Ascending aorta (tissue), 2 donors: ENCODE measurements at regions of chr17 and their contacts with region 1.

Region 1: DNA sequence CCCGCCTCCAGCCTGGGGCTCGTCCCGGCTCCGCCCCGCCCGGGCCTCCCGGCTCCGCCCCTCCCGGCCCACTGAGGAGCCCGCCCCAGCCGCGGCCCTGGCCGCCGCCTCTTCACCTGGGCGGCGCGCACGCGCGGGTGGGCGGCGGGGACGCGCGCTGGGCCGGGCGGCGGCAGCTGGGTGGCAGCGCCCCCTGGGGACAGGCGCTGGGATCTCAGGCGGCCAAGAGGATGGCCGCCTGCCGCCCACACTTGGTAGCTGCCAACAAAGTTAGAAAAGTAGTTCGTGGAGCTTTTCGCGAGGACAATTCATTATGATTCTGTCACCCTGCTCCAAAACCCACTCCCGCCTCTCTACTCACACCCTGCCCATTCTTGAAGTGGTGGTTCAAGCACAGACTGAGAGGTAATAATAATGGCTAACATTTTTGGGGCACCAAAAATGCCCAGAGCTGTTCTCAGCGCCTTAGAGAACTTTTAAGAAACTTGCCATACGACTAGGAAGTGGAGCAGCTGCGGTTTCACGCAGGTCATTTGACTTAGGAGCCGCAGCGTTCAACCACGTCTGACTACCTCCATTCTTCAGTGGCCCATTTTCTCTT is 340 bp upstream of the MYO1D start:
- DNase-seq: peak; percentile 50 to 96
- H3K4me3 ChIP-seq: peak overlapping the region; percentile 85 to 93
- H3K27ac ChIP-seq: peak overlapping the region; percentile 96 to 98
- H3K4me1 ChIP-seq: peaks cover 4 to 19% of the 10 kb centered on the region in 2 donors
- H3K27me3 ChIP-seq: no peaks in the 10 kb centered on the region
- CTCF ChIP-seq: peak; percentile 73 to 100 (median 79)

Region 2: DNA sequence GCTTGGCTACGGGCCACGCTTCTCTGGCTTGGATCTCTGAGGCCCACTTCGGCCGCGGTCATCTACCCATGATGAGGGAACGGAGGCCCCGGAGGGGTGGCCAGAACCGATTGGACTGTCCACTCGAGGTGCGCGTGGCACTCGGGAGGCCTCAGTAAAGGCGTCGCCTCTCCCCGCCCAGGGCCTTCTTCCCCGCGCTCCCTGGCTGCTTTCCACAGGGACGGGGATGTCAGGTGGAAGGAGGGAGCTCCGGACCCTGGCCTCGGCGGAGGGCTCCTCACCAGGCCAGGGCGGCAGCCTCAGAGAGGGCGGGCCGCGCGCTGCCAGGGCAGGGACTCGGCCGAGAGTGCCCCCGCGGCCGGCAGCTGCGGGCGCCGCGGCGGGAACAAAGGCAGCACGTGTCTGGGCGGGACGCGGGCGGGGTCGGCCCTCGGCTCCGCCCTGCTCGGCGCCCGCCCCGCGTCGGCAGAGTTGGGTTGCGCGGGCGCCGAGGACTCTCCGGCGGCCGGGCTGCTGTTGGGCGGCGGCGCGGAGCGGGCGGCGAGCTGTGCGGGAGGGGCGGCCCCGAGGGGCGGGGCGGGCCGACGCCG is 391.1 kb before region 1 on chr17:
- intact Hi-C with region 1: loop called (anchors 5 kb)
- DNase-seq: peak in 1 of 2 donors; percentile 84
- H3K4me3 ChIP-seq: peak overlapping the region; percentile 75 to 76
- H3K27ac ChIP-seq: peak overlapping the region; percentile 80 to 81
- H3K4me1 ChIP-seq: peaks cover 0 to 27% of the 10 kb centered on the region in 2 donors
- H3K27me3 ChIP-seq: no peaks in the 10 kb centered on the region
- CTCF ChIP-seq: no peak

Region 3: GRCh38 chr17:32659419-32659842 is 217.8 kb before region 1 on chr17:
- intact Hi-C with region 1: loop called (anchors 10 kb)
- DNase-seq: peak; percentile 12 to 85
- H3K4me3 ChIP-seq: no peak overlapping the region
- H3K27ac ChIP-seq: no peak overlapping the region
- H3K4me1 ChIP-seq: peaks cover 0 to 19% of the 10 kb centered on the region in 2 donors
- H3K27me3 ChIP-seq: no peaks in the 10 kb centered on the region
- CTCF ChIP-seq: peak; percentile 77 to 92 (median 90)

Region 4: DNA sequence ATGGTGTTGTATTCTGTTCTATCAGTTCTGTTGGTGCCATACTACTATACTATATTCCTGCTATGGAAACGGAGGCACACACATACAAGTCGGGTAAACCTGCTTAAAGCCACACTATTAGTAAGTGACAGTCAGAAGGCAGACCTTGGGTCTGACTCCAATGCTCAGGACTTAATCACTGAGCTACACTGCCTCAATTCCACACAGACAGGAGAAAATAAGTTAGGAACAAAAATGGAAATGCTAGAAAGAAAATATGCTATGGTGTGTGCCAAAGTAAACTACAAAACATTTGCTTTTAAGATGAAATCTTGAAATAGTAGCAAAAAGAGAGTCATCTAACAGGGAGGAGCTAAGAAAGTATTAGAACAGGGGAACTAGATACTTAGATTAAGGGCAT is 48.4 kb before region 1 on chr17:
- intact Hi-C with region 1: loop called (anchors 2 kb)
- DNase-seq: no peak
- H3K4me3 ChIP-seq: no peak overlapping the region
- H3K27ac ChIP-seq: peak overlapping the region; percentile 44 to 81
- H3K4me1 ChIP-seq: peaks cover 0 to 47% of the 10 kb centered on the region in 2 donors
- H3K27me3 ChIP-seq: no peaks in the 10 kb centered on the region
- CTCF ChIP-seq: no peak

Region 5: GRCh38 chr17:32854207-32854606 is 23.1 kb before region 1 on chr17:
- intact Hi-C with region 1: no loop called
- DNase-seq: no peak
- H3K4me3 ChIP-seq: no peak overlapping the region
- H3K27ac ChIP-seq: peak overlapping the region; percentile 13 to 59
- H3K4me1 ChIP-seq: peaks cover 0 to 35% of the 10 kb centered on the region in 2 donors
- H3K27me3 ChIP-seq: no peaks in the 10 kb centered on the region
- CTCF ChIP-seq: no peak

Region 6: GRCh38 chr17:32936894-32937500 is 59.7 kb after region 1 on chr17:
- intact Hi-C with region 1: loop called (anchors 2 kb)
- DNase-seq: peak in 1 of 2 donors; percentile 86
- H3K4me3 ChIP-seq: no peak overlapping the region
- H3K27ac ChIP-seq: peak overlapping the region; percentile 20 to 63
- H3K4me1 ChIP-seq: peaks cover 0 to 9% of the 10 kb centered on the region in 2 donors
- H3K27me3 ChIP-seq: no peaks in the 10 kb centered on the region
- CTCF ChIP-seq: peak; percentile 76 to 86 (median 85)